ENCODE measurements at regions of chr1 and their contacts with region 1.

Region 1: DNA sequence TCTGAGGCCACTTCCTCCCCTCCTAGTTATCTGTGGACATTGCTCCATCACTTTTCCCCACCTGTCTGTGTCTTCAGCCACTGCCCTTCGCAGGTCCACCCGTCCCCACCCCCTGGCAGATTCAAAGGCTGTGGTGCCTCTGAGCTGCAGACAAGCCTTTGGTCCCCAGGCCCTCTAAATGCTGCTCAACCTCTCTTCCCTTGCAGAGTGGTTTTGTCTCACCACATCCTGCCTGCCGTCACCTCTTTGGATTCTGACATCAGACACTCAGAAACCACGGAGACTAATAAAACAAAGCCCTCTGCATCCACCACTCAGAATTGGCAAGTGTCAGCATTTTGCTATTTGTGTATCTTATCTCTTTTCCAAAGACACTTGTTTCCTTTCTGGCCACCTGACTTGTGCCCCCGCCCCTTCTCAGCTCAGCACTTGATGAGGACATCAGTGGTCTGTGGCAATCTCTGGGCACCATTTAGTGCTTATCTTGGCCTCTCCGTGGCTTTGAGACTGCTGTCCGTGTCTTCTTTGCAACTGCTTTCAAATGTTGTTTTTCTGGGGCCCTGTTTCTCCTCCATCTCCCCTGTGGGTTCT is 7.7 kb downstream of the CNIH3 start:
- DNase-seq: peak; percentile 95
- H3K4me3 Mint-ChIP-seq: peak overlapping the region; percentile 64
- H3K27ac Mint-ChIP-seq: peak overlapping the region; percentile 87
- H3K4me1 Mint-ChIP-seq: peaks cover 35% of the 10 kb centered on the region
- H3K27me3 Mint-ChIP-seq: peaks cover 32% of the 10 kb centered on the region

Region 2: GRCh38 chr1:224317383-224318024 is 306.3 kb before region 1 on chr1:
- intact Hi-C with region 1: no loop called
- DNase-seq: no peak
- H3K4me3 Mint-ChIP-seq: no peak overlapping the region
- H3K27ac Mint-ChIP-seq: no peak overlapping the region
- H3K4me1 Mint-ChIP-seq: peaks cover 10% of the 10 kb centered on the region
- H3K27me3 Mint-ChIP-seq: no peaks in the 10 kb centered on the region

Region 3: GRCh38 chr1:224542783-224543440 is 80.9 kb before region 1 on chr1:
- intact Hi-C with region 1: loop called (anchors 2 kb)
- DNase-seq: peak; percentile 75
- H3K4me3 Mint-ChIP-seq: no peak overlapping the region
- H3K27ac Mint-ChIP-seq: peak overlapping the region; percentile 39
- H3K4me1 Mint-ChIP-seq: peaks cover 18% of the 10 kb centered on the region
- H3K27me3 Mint-ChIP-seq: peaks cover 14% of the 10 kb centered on the region